Endothelial cell of umbilical vein (primary cell): ENCODE measurements at regions of chr17 and their contacts with region 1.

Region 1: GRCh38 chr17:29740017-29740416 is 117.3 kb upstream of the CORO6 start:
- DNase-seq: peak; percentile 12
- H3K4me3 ChIP-seq: no peak overlapping the region
- H3K27ac ChIP-seq: no peak overlapping the region
- H3K4me1 ChIP-seq: peaks cover 42% of the 10 kb centered on the region
- H3K27me3 ChIP-seq: no peaks in the 10 kb centered on the region
- CTCF ChIP-seq: no peak
- POLR2A ChIP-seq: no peak

Region 2: DNA sequence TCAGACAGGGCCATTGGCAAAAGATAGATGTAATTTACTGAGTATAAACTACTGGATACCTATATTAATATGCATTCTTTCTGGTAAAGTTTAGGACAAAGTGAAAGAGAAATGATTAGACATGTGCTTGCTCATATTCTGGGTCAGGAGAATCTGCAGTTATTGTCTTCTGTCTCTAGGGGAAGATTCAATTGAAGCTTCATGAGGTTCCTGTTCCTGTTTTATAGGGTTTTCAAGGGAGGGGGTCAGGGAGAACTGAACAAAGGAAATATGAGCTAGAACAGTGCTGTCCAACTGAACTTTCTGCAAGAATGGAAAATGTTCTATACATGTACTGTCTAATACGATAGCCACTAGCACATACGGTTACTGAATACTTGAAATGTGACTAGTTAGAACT is 58.0 kb before region 1 on chr17:
- CTCF ChIA-PET with region 1: no interaction called
- POLR2A ChIA-PET with region 1: interaction called, 3 read pairs
- dilution Hi-C with region 1: no loop called
- intact Hi-C with region 1: loop called (anchors 5 kb)
- DNase-seq: peak; percentile 41
- H3K4me3 ChIP-seq: no peak overlapping the region
- H3K27ac ChIP-seq: peak overlapping the region; percentile 91
- H3K4me1 ChIP-seq: peaks cover 33% of the 10 kb centered on the region
- H3K27me3 ChIP-seq: no peaks in the 10 kb centered on the region
- CTCF ChIP-seq: no peak
- POLR2A ChIP-seq: no peak

Region 3: GRCh38 chr17:29760761-29761696 is 21.0 kb after region 1 on chr17:
- CTCF ChIA-PET with region 1: interaction called, 7 read pairs
- POLR2A ChIA-PET with region 1: interaction called, 5 read pairs
- dilution Hi-C with region 1: no loop called
- intact Hi-C with region 1: loop called (anchors 1 kb)
- DNase-seq: peak; percentile 89
- H3K4me3 ChIP-seq: peak overlapping the region; percentile 56 to 93 (median 89)
- H3K27ac ChIP-seq: peak overlapping the region; percentile 84
- H3K4me1 ChIP-seq: peaks cover 11% of the 10 kb centered on the region
- H3K27me3 ChIP-seq: no peaks in the 10 kb centered on the region
- CTCF ChIP-seq: no peak
- POLR2A ChIP-seq: peak; percentile 90

Region 4: GRCh38 chr17:29835435-29836351 is 95.7 kb after region 1 on chr17:
- CTCF ChIA-PET with region 1: no interaction called
- POLR2A ChIA-PET with region 1: no interaction called
- dilution Hi-C with region 1: no loop called
- intact Hi-C with region 1: no loop called
- DNase-seq: no peak
- H3K4me3 ChIP-seq: no peak overlapping the region
- H3K27ac ChIP-seq: no peak overlapping the region
- H3K4me1 ChIP-seq: peaks cover 3% of the 10 kb centered on the region
- H3K27me3 ChIP-seq: no peaks in the 10 kb centered on the region
- CTCF ChIP-seq: no peak
- POLR2A ChIP-seq: no peak